ENCODE measurements at regions of chr7 and their contacts with region 1.

Region 1: GRCh38 chr7:155738652-155739537 is 73.4 kb downstream of the SHH start:
- DNase-seq: peak; percentile 44
- H3K4me3 Mint-ChIP-seq: peak overlapping the region; percentile 67
- H3K27ac Mint-ChIP-seq: peak overlapping the region; percentile 79
- H3K4me1 Mint-ChIP-seq: peaks cover 65% of the 10 kb centered on the region
- H3K27me3 Mint-ChIP-seq: no peaks in the 10 kb centered on the region

Region 2: DNA sequence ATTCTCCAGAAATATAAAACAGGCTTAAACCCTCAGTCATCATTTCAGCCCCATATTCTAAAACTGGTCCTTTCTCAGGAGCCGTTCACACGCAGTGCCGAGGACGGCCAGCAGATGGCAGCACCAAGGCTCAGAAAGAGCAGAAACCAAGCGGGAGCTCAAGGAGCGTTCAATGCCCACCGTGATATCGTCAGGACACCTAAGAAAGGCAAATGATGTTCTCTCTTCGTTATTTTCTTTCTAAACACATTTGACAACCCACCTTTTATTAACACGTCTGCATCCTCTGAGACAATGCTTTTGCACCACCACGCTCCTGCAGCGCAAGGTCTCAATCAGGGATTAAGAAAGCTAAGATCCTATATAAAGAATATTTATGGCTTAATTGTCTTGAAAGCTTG is 140.1 kb before region 1 on chr7:
- intact Hi-C with region 1: loop called (anchors 1 kb)
- DNase-seq: peak; percentile 69
- H3K4me3 Mint-ChIP-seq: no peak overlapping the region
- H3K27ac Mint-ChIP-seq: no peak overlapping the region
- H3K4me1 Mint-ChIP-seq: peaks cover 10% of the 10 kb centered on the region
- H3K27me3 Mint-ChIP-seq: peaks cover 29% of the 10 kb centered on the region

Region 3: DNA sequence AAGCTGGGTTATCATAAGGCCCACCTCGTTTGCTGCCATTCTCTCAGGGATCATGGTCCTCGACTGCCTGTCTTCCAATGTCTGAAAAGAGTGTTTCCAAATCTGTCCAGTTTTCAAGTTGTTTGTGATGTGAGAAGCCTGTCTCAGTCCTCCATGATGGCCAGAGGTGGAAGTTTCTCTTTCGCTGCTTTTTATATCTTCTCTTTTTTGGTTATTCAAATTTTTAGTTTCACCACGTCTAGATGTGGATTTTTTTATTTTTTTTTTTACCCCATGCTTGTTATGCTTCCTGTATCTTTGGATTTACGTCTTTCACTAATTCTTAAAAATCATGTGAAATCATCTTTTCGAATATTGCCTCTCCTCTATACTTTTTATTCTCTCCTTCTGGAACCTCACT is 100.5 kb before region 1 on chr7:
- intact Hi-C with region 1: no loop called
- DNase-seq: no peak
- H3K4me3 Mint-ChIP-seq: no peak overlapping the region
- H3K27ac Mint-ChIP-seq: no peak overlapping the region
- H3K4me1 Mint-ChIP-seq: peaks cover 2% of the 10 kb centered on the region
- H3K27me3 Mint-ChIP-seq: peaks cover 24% of the 10 kb centered on the region

Region 4: GRCh38 chr7:155660059-155660757 is 78.7 kb before region 1 on chr7:
- intact Hi-C with region 1: loop called (anchors 2 kb)
- DNase-seq: no peak
- H3K4me3 Mint-ChIP-seq: no peak overlapping the region
- H3K27ac Mint-ChIP-seq: peak overlapping the region; percentile 87
- H3K4me1 Mint-ChIP-seq: peaks cover 48% of the 10 kb centered on the region
- H3K27me3 Mint-ChIP-seq: no peaks in the 10 kb centered on the region

Region 5: GRCh38 chr7:155763691-155764437 is 25.0 kb after region 1 on chr7:
- intact Hi-C with region 1: loop called (anchors 1 kb)
- DNase-seq: peak; percentile 65
- H3K4me3 Mint-ChIP-seq: peak overlapping the region; percentile 85
- H3K27ac Mint-ChIP-seq: peak overlapping the region; percentile 100
- H3K4me1 Mint-ChIP-seq: peaks cover 66% of the 10 kb centered on the region
- H3K27me3 Mint-ChIP-seq: no peaks in the 10 kb centered on the region